Mammary epithelial cell (primary cell): ENCODE measurements at regions of chr12 and their contacts with region 1.

Region 1: GRCh38 chr12:93137656-93138612 is 208.8 kb upstream of the EEA1 start:
- DNase-seq: peak; percentile 99
- H3K4me3 ChIP-seq: no peak overlapping the region
- H3K27ac ChIP-seq: peak overlapping the region; percentile 49
- H3K4me1 ChIP-seq: peaks cover 28% of the 10 kb centered on the region
- H3K27me3 ChIP-seq: no peaks in the 10 kb centered on the region
- CTCF ChIP-seq: no peak

Region 2: DNA sequence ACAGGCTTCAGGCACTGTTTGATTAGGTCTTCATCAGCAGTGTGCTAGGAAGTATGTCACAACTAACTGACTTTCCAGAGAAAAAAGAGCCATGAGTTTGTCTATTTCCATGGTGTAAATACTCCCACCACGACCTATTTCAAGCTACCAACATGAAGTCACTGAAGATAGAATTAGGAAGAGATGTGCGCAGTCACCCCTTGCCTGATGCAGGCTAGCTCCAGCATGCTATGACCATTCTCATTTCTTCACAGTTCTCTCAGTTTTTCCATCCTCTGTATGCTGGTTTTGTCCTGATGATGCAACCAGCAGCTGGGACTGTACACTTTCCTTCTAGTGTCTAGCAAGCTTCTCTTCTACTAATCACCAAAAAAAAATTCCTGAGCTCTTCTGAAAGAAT is 48.2 kb after region 1 on chr12:
- CTCF ChIA-PET with region 1: interaction called, 3 read pairs
- dilution Hi-C with region 1: loop called (anchors 5 kb)
- in situ Hi-C with region 1: no loop called
- intact Hi-C with region 1: no loop called
- DNase-seq: no peak
- H3K4me3 ChIP-seq: no peak overlapping the region
- H3K27ac ChIP-seq: no peak overlapping the region
- H3K4me1 ChIP-seq: no peaks in the 10 kb centered on the region
- H3K27me3 ChIP-seq: no peaks in the 10 kb centered on the region
- CTCF ChIP-seq: no peak